ENCODE measurements at regions of chr2 and their contacts with region 1.

Region 1: DNA sequence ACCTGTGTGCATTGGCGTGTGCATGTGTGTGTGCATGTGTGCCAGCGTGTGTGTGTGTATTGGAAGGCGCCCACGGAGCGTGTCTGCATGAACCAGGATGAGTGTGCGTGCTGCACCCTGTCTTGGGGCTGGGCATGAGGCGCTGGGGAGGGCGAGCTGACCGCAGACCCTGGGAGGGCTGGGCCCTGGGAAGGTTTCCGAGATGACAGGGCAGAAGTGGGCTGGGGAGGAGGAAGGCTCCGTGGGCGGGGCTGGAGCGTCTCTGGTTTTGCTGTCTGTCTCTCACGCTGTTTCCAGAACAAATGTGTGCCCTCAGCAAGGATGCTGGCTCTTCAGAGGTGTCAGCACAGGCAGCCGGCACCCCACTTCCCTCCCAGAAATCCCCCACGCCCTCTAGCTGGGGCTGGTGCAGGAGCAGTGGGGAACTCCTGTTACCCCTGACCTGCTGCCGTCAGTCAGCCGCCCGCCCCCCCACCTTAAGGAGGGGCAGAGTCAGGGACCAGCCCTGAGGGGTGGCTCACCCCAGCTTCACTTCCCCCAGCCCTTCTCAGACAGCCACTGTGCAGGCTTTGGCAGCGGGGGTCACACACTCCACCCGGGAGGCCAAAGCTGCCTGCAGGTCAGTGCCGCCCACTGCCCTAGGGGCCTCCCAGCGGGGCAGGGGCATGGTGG is at the start of gene GPR35:
- DNase-seq: peak; percentile 89
- ATAC-seq: peak; percentile 60
- H3K4me3 Mint-ChIP-seq: peak within 1 kb of the TSS; percentile 78
- H3K27ac Mint-ChIP-seq: peak within 1 kb of the TSS; percentile 95
- H3K4me1 Mint-ChIP-seq: peaks cover 73% of the 10 kb centered on the region
- H3K27me3 Mint-ChIP-seq: no peaks in the 10 kb centered on the region
- total RNA-seq, gene GPR35: 21.6 to 23.8 TPM

Region 2: DNA sequence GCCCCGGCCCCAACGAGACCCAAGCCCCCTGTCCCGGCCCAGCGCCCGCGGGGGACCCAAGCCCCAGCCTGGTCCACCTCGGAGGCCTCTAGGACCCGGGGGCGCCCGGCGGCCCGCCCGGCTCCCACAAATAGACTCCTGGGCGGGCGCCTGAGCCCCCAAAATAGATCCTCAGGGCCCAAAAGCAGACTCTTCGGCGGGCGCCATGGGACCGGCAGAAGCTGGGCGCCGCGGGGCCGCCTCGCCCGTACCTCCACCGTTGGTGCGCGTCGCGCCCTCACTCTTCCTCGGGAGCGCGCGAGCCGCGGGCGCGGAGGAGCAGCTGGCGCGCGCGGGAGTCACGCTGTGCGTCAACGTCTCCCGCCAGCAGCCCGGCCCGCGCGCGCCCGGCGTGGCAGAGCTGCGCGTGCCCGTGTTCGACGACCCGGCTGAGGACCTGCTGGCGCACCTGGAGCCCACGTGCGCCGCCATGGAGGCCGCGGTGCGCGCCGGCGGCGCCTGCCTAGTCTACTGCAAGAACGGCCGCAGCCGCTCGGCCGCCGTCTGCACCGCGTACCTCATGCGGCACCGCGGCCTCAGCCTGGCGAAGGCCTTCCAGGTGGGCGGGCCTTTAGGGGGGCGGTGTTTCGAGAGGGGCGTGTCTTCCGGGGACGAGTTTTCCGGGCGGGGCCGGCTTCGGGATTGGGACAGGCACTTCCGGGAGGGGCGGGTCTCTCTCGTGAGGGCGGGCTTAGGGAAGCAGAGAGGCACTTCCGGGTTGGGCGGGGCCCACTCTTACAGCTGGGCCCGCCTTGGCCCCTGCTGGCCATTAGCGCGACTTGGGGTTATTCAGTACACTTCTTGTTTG is 64.4 kb before region 1 on chr2:
- CTCF ChIA-PET with region 1: interaction called, 25 read pairs
- POLR2A ChIA-PET with region 1: interaction called, 24 read pairs
- DNase-seq: peak; percentile 100
- ATAC-seq: peak; percentile 61
- H3K4me3 Mint-ChIP-seq: peak overlapping the region; percentile 85
- H3K27ac Mint-ChIP-seq: peak overlapping the region; percentile 81
- H3K4me1 Mint-ChIP-seq: peaks cover 77% of the 10 kb centered on the region
- H3K27me3 Mint-ChIP-seq: no peaks in the 10 kb centered on the region

Region 3: DNA sequence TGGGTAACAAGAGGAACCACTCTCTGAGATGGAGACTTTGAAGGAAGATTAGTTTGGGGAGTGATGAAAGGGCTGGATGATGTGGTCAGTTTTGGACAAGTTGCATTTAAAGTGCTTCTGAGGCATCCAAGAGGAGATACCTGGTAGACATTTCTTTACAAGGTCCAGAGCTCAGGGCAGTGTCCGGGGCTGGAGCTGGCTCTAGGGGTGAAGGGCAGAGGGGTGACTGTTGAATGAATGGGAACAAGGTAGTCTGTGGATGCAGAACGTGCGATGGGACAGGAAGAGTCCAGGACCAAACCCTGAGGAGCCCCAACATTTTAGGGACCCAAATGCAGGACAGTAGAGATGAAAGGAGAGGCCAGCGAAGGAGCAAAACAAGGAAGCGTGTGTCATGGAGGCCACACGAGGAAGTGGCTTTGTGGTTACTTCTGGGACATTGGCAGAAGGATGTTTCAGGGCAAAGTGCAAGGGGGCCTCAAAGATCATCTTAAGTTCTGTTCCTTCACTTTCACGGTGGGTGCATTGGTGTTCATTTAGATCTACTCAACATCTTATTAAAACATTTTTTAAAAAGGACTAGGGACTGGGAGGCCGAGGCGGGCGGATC is 13.4 kb before region 1 on chr2:
- CTCF ChIA-PET with region 1: interaction called, 22 read pairs
- POLR2A ChIA-PET with region 1: interaction called, 9 read pairs
- DNase-seq: peak; percentile 67
- ATAC-seq: peak; percentile 28
- H3K4me3 Mint-ChIP-seq: no peak overlapping the region
- H3K27ac Mint-ChIP-seq: no peak overlapping the region
- H3K4me1 Mint-ChIP-seq: peaks cover 18% of the 10 kb centered on the region
- H3K27me3 Mint-ChIP-seq: no peaks in the 10 kb centered on the region

Measured in activated CD8-positive, alpha-beta T cell treated with anti-CD3 and anti-CD28 coated beads, Interleukin-2, amount 10 ng/mL, durations not matched to agents 7 days and 5 days (primary cell).